Ascending aorta (tissue), 2 donors: ENCODE measurements at regions of chr13 and their contacts with region 1.

Region 1: DNA sequence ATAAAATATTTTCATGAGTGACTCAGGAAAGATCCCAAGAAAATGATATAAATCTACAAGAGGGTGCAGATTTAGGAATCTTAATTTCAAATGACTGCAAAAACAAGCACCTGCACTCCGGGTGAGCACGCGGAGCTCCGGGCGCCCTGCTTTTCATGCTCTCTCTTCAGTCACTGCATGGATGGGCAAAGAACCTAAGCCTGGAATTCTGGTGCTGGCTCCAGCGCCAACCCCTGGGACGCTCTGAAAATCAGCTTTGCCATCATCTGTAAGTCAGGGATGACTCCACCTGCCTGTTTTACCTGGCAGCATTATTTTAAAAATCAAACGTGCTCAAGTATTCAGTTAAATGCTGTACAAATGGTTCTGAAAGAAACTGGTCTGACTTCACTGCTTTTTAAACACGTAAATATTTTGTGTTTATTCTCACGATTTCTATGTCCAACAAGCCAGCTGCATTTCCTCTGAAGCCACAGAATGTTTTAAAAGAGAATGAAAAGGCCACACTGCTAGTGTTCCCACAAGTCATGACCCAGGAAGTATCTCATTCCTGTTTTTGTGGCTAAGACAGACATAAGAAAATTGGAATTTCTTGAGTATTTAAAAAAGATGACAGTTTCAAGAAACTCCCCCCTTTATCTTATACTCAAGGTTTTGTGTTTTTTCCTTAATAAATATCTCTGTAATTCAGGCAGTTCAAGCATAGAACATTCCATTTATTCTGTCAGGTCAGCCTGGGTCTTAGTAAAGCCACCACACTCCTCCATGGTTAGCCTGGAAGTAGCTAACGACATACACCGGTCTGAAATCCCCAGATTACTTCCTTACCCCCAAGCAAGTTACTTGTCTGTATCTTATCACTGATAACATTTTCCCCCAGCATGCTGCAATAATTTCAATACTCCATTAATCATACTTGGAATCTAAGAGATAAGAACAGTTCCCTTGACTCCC is 81.1 kb downstream of the COL4A1 start:
- DNase-seq: no peak
- H3K4me3 ChIP-seq: no peak overlapping the region
- H3K27ac ChIP-seq: peak overlapping the region; percentile 39 to 72
- H3K4me1 ChIP-seq: peaks cover 5 to 26% of the 10 kb centered on the region in 2 donors
- H3K27me3 ChIP-seq: no peaks in the 10 kb centered on the region
- CTCF ChIP-seq: no peak

Region 2: DNA sequence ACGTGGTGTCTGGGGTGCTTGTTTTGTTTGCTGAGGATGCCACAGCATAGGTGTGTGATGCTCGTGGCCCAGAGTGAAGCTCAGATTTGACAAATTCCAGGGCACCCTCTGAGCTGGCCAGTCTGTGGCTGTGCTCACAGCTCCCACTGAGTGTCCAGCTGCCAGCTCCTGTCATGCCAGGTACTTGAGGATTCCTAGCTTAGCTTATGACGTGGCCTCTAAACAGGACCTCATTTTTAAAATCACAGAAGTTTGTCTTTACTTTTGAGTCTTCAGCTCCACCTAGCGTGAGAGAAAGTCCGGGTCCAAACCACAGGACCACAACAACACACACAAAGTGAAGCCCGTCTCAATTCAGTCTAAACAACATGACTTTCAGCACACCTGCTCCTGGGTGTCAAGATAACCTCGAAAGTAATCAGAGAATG is 218.4 kb after region 1 on chr13:
- intact Hi-C with region 1: loop called (anchors 1 kb)
- DNase-seq: peak in 1 of 2 donors; percentile 75
- H3K4me3 ChIP-seq: no peak overlapping the region
- H3K27ac ChIP-seq: peak overlapping the region; percentile 80
- H3K4me1 ChIP-seq: peaks cover 0 to 17% of the 10 kb centered on the region in 2 donors
- H3K27me3 ChIP-seq: no peaks in the 10 kb centered on the region
- CTCF ChIP-seq: peak in 2 of 3 experiments; percentile 17 to 48

Region 3: GRCh38 chr13:110907951-110908898 is 682.3 kb after region 1 on chr13:
- intact Hi-C with region 1: no loop called
- DNase-seq: no peak
- H3K4me3 ChIP-seq: no peak overlapping the region
- H3K27ac ChIP-seq: peak overlapping the region; percentile 19 to 66
- H3K4me1 ChIP-seq: peaks cover 12 to 41% of the 10 kb centered on the region in 2 donors
- H3K27me3 ChIP-seq: no peaks in the 10 kb centered on the region
- CTCF ChIP-seq: no peak